Thyroid gland (tissue), 4 donors: ENCODE measurements at regions of chr17 and their contacts with region 1.

Region 1: GRCh38 chr17:48016112-48016511 is 21.5 kb downstream of the COPZ2 start:
- DNase-seq: no peak
- H3K4me3 ChIP-seq: no peak overlapping the region
- H3K27ac ChIP-seq: no peak overlapping the region
- H3K4me1 ChIP-seq: peaks cover 7 to 12% of the 10 kb centered on the region in 2 donors
- H3K27me3 ChIP-seq: no peaks in the 10 kb centered on the region
- CTCF ChIP-seq: no peak
- POLR2A ChIP-seq: no peak

Region 2: GRCh38 chr17:47670081-47670480 is 346.0 kb before region 1 on chr17:
- intact Hi-C with region 1: no loop called
- DNase-seq: no peak
- H3K4me3 ChIP-seq: no peak overlapping the region
- H3K27ac ChIP-seq: no peak overlapping the region
- H3K4me1 ChIP-seq: no peaks in the 10 kb centered on the region
- H3K27me3 ChIP-seq: no peaks in the 10 kb centered on the region
- CTCF ChIP-seq: no peak
- POLR2A ChIP-seq: no peak

Region 3: DNA sequence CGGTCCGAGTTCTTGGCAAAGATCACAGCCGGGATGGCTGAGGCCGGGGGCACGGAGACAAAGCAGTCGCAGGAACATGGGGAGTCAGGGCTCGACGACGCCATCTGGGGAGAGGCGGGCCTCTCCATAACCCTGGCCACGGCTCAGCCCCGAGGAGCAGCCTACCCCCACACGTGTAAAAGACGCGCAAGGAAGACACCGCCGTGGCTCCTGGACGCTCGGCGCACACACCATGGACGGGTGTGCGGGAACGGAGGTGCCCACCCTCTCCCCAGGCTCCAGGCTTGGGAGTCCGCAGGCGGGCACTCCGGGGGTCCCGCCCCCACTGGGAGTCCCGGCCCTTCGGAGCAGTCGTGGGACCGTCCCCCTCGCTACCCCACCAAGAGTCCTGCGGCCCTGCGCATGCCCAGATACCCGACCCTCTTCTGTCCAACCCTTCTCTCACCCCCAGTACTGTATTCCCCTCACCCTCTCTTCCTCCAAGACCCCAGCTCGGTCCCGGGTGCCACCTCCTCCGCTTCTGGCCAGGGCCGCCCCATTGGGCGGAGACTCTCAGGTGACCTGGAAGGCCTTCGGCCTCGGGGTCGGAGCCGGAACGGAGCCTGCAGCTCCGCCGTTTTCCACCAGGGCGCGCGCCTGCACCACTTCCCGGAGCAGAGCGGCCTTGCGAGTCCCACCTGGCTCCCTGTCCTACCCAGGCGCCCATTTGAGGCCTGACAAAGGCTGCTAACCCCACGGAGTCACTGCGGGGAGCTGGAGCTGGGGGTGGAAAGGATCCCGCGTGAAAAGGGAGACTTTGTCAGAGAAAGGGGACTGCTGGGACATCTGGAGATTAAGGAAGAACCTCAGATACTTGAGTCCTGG is 175.1 kb before region 1 on chr17 and contains the start of gene SCRN2:
- intact Hi-C with region 1: loop called (anchors 5 kb)
- DNase-seq: peak; percentile 91 to 92
- H3K4me3 ChIP-seq: peak within 1 kb of the TSS; percentile 50 to 77 (median 53)
- H3K27ac ChIP-seq: peak within 1 kb of the TSS; percentile 34 to 63 (median 62)
- H3K4me1 ChIP-seq: peaks cover 11 to 26% of the 10 kb centered on the region in 2 donors
- H3K27me3 ChIP-seq: no peaks in the 10 kb centered on the region
- CTCF ChIP-seq: peak in 5 of 6 experiments; percentile 93 to 99 (median 98)
- POLR2A ChIP-seq: peak in 1 of 2 donors; percentile 59
- total RNA-seq, gene SCRN2: 37.0 to 71.5 (median 49.1) TPM

Region 4: DNA sequence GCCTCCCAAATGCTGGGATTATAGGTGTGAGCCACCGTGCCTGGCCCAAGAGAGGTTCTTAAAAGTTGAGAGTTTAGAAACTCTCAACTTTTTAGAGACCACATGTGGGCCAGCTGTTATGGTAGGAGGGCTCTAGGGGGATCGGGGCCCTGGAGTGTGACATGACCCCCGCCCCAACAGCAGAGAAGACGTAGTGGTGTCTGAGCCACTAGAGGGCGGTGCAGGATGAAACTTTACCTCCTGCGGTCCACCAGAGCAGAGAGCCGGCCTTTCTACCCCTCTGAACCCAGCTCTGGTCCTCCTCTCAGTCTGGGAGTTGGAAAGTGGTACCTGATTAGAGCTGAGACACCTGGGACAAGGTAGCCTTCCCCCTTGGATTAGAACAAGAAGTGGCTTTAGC is 37.8 kb before region 1 on chr17:
- intact Hi-C with region 1: loop called (anchors 5 kb)
- DNase-seq: peak; percentile 59 to 65
- H3K4me3 ChIP-seq: no peak overlapping the region
- H3K27ac ChIP-seq: no peak overlapping the region
- H3K4me1 ChIP-seq: no peaks in the 10 kb centered on the region
- H3K27me3 ChIP-seq: no peaks in the 10 kb centered on the region
- CTCF ChIP-seq: peak; percentile 38 to 74 (median 58)
- POLR2A ChIP-seq: no peak